ENCODE measurements at regions of chr4 and their contacts with region 1.

Region 1: DNA sequence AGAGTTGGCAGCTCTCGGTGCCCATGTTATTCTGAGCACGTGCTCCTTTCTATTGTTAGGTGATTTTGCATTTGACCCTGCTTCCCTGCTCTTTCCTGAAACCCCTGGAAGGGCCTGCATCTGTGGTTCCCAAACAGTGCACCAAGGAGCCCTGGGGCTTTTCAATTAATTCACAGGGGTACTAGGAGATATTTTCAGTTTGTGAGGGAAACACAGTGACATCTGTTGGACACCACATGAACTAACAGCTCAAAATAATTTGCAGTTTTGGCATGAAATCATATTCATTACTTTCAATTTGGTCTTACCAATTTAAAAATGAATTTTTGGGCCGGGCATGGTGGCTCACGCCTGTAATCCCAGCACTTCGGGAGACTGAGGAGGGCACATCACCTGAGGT is 156.6 kb downstream of the GATB start:
- DNase-seq: peak; percentile 36
- ATAC-seq: 0 out of 2 replicates have a peak, but pooled peaks have one; percentile 18
- H3K4me3 ChIP-seq: no peak overlapping the region
- H3K27ac ChIP-seq: no peak overlapping the region
- H3K4me1 ChIP-seq: no peaks in the 10 kb centered on the region
- H3K27me3 ChIP-seq: no peaks in the 10 kb centered on the region
- CTCF ChIP-seq: peak; percentile 59

Region 2: GRCh38 chr4:151117371-151117962 is 486.8 kb before region 1 on chr4:
- CTCF ChIA-PET with region 1: interaction called, 3 read pairs
- POLR2A ChIA-PET with region 1: no interaction called
- intact Hi-C with region 1: loop called (anchors 5 kb)
- DNase-seq: peak; percentile 72
- ATAC-seq: peak; percentile 67
- H3K4me3 ChIP-seq: no peak overlapping the region
- H3K27ac ChIP-seq: no peak overlapping the region
- H3K4me1 ChIP-seq: no peaks in the 10 kb centered on the region
- H3K27me3 ChIP-seq: no peaks in the 10 kb centered on the region
- CTCF ChIP-seq: peak; percentile 76

Region 3: GRCh38 chr4:151418385-151418784 is 185.9 kb before region 1 on chr4:
- CTCF ChIA-PET with region 1: no interaction called
- POLR2A ChIA-PET with region 1: no interaction called
- intact Hi-C with region 1: loop called (anchors 5 kb)
- DNase-seq: peak; percentile 91
- ATAC-seq: peak; percentile 90
- H3K4me3 ChIP-seq: no peak overlapping the region; the same call in 1 of the 2 replicates
- H3K27ac ChIP-seq: peak overlapping the region; percentile 93
- H3K4me1 ChIP-seq: peaks cover 56% of the 10 kb centered on the region
- H3K27me3 ChIP-seq: no peaks in the 10 kb centered on the region
- CTCF ChIP-seq: no peak

Region 4: DNA sequence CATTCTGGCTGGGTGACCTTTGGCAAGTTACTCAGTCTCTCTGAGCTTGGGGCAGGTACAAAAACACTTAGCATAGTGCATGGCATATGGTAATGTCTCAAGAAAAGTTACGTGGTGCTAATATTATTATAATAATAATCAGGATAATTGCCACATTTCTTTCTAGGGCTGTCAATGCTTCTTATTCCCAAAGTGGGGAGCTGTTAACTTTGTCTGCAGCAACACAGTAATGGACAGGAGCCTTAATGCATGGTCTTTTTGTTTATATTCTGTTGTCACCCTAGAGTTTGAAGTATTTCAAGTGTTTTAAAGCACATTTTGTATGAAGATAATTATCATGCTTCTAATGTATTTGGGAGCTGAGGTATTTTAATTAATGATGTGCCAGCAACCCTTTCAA is 73.5 kb before region 1 on chr4:
- CTCF ChIA-PET with region 1: interaction called, 4 read pairs
- POLR2A ChIA-PET with region 1: no interaction called
- intact Hi-C with region 1: loop called (anchors 2 kb)
- DNase-seq: peak; percentile 12
- ATAC-seq: no peak
- H3K4me3 ChIP-seq: no peak overlapping the region
- H3K27ac ChIP-seq: no peak overlapping the region
- H3K4me1 ChIP-seq: 0 out of 2 replicates have a peak, but pooled peaks cover 3% of the 10 kb centered on the region
- H3K27me3 ChIP-seq: no peaks in the 10 kb centered on the region
- CTCF ChIP-seq: peak; percentile 58

Measured in PC-3 (cell line).